T-cell (primary cell): ENCODE measurements at regions of chr16 and their contacts with region 1.

Region 1: DNA sequence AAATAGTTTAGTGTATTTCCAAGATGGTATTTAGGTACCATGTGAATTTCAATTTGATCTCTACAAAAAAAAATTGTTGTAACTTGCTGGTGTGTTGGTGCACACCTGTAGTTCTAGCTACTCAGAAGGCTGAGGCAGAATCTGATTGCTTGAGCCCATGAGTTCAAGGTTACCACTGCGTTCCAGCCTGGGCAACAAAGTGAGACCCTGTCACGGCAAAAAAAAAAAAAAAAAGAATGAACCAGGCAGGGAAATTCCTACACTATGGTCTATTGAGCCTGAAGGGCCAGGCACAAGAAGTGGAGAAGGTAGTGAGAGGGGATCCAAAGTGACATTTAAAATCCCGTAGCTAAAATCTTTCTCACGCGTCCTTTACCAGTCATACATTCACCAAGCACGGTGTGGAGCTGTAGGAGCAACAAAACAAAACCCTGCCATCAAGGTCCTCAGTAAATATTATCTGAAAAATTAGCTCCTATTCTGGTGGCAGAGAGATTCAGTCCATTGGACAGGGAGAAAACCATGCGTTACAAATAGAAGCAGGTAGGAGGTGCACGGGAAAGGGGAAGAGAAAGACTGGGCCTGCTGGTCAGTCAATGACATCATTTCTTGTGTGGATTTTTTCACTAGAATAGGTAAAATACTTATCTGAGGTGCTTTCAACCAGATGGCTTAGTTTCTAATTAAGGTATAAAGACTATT is 27.3 kb downstream of the TXNDC11 start:
- DNase-seq: no peak
- ATAC-seq: peak in 1 of 4 experiments; percentile 16
- H3K4me3 ChIP-seq: no peak overlapping the region
- H3K4me3 Mint-ChIP-seq: no peak overlapping the region
- H3K27ac ChIP-seq: no peak overlapping the region
- H3K27ac Mint-ChIP-seq: peak overlapping the region in 1 of 2 donors; percentile 32
- H3K4me1 ChIP-seq: peaks cover 0 to 3% of the 10 kb centered on the region in 2 experiments
- H3K4me1 Mint-ChIP-seq: peaks cover 21 to 26% (median 23%) of the 10 kb centered on the region in 3 donors
- H3K27me3 ChIP-seq: no peaks in the 10 kb centered on the region
- H3K27me3 Mint-ChIP-seq: no peaks in the 10 kb centered on the region

Region 2: DNA sequence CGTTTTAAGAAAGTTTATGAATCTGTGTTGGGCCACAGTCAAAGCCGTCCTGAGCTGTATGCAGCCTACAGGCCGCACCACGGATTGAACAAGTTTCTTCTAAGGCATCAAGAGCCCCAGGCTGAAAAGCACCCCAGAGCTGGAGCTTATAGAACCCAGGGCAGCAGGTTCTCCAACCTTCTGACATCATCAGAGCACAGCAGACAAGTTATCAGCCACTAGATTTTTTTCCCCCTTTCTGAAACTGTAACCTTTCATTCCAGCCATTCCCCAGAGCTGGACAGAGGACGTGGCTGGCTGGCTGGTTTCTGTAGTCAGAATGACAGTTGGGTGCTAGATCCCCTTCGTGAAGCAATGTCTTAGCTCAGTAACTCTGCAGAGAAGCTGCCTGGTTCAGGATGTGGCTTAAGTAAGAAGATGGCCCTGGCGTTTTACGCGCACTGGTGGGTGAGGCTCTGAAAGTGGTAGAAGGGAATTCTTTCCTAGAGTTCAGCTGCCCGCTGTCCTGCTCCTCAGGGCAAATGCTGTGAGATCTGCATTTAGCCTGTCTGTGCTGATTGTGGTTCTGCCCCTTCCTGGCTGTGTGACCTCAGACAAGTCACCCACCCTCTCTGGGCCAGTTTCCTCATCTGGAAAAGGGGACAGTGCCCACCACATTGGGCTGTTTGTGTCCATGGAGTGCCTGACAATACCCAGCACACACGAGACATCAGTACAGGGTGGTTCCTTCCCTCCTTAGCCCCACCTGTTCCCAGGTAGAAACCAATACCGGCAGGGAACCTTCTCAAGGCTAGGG is 782.3 kb before region 1 on chr16:
- CTCF ChIA-PET with region 1: interaction called in 1 of 2 experiments, 10 read pairs
- POLR2A ChIA-PET with region 1: no interaction called
- DNase-seq: no peak
- ATAC-seq: no peak
- H3K4me3 ChIP-seq: no peak overlapping the region
- H3K4me3 Mint-ChIP-seq: no peak overlapping the region
- H3K27ac ChIP-seq: no peak overlapping the region
- H3K27ac Mint-ChIP-seq: no peak overlapping the region
- H3K4me1 ChIP-seq: peaks cover 11 to 41% of the 10 kb centered on the region in 2 experiments
- H3K4me1 Mint-ChIP-seq: peaks cover 59 to 63% (median 63%) of the 10 kb centered on the region in 3 donors
- H3K27me3 ChIP-seq: no peaks in the 10 kb centered on the region
- H3K27me3 Mint-ChIP-seq: no peaks in the 10 kb centered on the region

Region 3: DNA sequence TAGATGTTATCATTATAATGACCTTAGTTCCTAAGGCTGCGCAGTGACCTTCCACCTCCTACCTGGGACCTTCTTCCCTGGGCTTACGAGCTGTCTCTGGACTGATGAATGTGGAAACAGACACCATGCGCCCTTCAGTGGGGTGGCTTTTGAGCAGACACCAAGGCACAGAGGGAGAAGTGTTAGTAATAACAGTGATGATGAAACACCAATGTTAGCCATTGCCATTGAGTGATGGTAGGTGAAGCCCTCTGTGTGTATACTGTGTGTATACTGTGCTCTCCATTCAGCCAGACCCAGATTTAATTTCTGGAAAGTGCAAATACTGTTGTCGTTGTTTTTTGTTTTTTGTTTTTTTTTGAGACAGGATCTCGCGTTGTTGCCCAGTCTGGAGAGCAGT is 726.5 kb before region 1 on chr16:
- CTCF ChIA-PET with region 1: interaction called in 1 of 2 experiments, 10 read pairs
- POLR2A ChIA-PET with region 1: no interaction called
- DNase-seq: no peak
- ATAC-seq: no peak
- H3K4me3 ChIP-seq: no peak overlapping the region
- H3K4me3 Mint-ChIP-seq: peak overlapping the region in 1 of 3 donors; percentile 71
- H3K27ac ChIP-seq: no peak overlapping the region
- H3K27ac Mint-ChIP-seq: peak overlapping the region in 1 of 2 donors; percentile 81
- H3K4me1 ChIP-seq: peaks cover 14 to 24% of the 10 kb centered on the region in 2 experiments
- H3K4me1 Mint-ChIP-seq: peaks cover 49 to 66% (median 61%) of the 10 kb centered on the region in 3 donors
- H3K27me3 ChIP-seq: no peaks in the 10 kb centered on the region
- H3K27me3 Mint-ChIP-seq: no peaks in the 10 kb centered on the region